GM10248 (cell line): ENCODE measurements at regions of chr11 and their contacts with region 1.

Region 1: DNA sequence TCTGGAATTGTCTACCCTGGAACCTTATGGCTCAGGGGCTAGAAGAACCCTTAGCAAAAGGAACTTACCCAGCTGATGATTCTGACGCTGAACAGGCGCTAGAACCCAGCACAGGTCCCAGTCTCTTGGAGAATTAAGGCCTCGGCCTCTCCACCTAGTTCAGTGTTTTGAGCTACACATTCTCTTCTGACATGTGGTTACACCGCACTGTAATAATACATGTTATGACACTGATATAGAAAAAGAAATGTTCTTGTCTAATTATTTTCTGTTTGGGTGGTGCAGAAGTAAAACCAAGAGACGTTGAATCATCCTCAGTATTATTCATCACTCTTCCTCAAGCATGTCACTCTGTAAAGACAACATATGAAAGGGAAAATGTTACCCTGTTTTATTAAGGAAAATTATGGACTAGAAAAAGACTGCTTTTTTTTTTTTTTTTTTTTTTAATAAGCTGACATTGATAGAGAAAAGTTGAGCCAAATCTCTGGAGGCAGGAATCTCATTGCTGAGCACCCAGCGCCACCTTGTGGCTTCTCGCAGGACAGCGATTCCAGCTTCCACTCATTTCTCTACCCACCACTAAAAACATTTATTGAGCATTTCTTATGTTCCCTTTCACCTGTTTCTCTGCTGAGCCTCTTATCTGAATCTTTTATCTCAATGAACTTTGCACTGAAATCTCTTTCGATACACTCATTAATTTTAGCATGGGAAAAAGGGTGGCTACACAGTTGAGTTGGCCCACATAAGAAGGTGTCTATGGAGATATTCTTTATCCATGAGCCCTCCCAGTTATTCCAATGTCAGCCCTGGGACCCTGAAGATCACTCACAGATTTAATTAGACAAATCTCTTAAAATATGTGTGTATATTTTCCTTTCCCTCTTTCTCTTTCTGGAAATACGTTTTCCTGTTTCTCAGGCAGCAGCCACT is 12.6 kb upstream of the APLNR start:
- DNase-seq: peak; percentile 52
- CTCF ChIP-seq: peak; percentile 79

Region 2: DNA sequence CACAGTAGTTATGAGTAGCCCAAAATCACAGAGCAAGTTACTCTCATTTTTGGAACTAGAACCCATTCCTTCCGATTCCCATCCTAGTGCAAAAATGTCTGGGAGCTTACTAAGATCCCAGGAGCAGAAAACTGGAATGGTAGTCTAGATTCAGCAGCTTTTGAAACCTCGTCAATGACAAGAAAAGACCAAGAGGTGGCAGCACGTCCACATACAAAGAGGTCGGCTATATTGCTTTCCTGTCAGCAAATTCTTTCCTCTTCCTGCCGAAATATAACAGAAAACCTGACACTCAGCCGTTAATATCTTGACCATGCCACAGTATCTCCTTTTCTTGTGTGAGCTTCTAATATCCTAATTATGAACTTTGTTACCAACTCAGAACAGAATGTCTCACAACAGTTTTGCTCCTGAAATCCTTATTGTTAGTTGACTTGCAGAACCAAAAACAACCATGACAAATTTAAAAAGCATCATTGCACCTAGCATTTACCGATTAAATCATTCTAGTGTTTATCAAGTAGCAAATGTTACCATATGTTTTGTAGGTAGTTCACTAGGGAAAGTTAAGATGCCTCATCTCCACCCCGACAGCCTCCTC is 408.3 kb before region 1 on chr11:
- CTCF ChIA-PET with region 1: interaction called, 177 read pairs
- POLR2A ChIA-PET with region 1: no interaction called
- DNase-seq: peak; percentile 37
- CTCF ChIP-seq: peak; percentile 58

Region 3: DNA sequence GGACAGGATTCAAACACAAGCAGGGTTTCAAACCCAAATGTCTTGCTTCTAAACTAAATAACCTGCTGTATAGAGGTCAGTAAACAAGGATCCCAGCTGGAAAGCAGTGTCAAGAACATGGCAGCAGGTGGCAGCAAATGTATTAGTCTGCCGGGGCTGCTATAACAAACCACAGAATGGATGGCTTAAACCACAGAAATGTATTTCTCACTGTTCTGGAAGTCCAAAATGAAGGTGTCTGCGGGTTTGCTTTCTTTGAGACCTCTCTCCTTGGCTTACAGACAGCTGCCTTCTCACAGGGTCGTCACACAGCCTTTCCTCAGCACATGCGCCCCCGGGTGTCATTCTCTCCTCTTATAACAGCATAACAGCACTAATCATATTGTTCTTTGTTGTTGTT is 133.0 kb before region 1 on chr11:
- CTCF ChIA-PET with region 1: interaction called, 53 read pairs
- POLR2A ChIA-PET with region 1: no interaction called
- DNase-seq: peak; percentile 14
- CTCF ChIP-seq: peak; percentile 36

Region 4: DNA sequence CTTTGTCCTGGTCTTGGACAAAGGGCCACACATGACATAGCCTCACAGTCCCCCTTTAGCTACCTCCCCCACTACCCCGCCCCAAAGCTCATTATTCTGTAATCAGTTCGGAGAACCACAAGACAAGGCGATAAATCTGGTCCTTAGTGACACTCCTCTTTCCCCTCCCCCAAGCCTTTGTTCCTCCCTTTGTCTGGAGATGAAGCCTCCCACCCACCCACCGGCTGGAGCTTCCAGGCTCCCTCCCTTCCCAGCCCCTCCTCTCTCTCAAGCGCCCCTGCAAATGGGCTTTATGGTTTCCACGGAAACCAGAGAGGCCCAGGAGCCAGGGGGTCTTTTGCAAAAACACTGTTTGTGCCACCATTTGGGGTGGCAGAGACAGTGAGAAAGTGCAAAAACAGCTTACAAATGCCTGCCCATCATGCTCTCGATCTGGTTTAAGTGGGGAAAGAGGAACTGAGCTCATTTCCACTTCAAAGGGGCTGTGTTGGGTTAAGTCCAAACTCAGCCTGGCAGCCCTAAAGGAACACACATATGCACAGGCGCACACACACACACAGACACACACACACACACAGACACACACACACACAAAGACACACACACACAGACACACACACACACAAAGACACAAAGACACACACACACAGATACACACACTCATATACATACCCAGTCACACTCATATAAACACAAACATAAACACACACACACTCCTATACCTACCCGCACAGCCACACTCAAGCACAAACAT is 36.1 kb before region 1 on chr11:
- CTCF ChIA-PET with region 1: interaction called, 12 read pairs
- POLR2A ChIA-PET with region 1: no interaction called
- DNase-seq: no peak
- CTCF ChIP-seq: no peak

Region 5: DNA sequence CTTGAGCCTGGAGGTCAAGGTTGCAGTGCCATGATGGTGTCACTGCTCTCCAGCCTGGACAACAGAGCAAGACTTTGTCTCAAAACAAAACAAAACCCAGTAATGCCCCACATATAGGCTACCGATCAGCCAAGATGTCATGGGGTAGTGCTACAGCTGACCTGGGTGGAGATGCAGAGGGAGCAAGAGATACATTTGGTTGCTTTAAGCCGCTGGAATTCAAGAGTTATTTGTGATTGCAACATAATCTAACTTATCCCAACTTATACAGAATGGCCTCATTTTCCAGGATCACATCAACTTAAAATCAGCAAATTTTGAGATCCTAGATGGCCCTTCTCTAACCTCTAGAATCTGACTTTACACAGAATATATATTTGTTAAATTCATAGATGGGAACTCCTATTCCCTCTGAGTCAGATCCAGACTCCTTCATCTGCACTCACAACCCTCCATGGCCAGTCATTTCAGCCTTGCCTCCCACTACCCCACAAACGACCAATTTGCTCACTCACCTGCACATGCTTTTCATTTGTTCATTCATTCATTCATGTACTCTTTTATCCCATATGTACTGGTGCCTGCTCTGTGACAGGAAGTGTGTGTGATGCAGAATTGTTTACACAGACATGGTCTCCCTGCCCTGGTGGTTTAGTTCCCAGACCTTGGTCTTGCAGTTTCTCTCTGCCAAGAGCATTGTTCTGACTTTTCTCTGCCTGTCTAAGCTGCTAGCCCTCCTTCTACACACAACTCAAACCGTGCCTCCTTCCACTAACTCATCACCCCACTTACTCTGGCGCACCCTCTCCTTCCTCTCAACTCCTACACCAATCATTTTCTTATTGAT is 11.5 kb after region 1 on chr11:
- CTCF ChIA-PET with region 1: interaction called, 26 read pairs
- POLR2A ChIA-PET with region 1: no interaction called
- DNase-seq: no peak
- CTCF ChIP-seq: no peak

Region 6: DNA sequence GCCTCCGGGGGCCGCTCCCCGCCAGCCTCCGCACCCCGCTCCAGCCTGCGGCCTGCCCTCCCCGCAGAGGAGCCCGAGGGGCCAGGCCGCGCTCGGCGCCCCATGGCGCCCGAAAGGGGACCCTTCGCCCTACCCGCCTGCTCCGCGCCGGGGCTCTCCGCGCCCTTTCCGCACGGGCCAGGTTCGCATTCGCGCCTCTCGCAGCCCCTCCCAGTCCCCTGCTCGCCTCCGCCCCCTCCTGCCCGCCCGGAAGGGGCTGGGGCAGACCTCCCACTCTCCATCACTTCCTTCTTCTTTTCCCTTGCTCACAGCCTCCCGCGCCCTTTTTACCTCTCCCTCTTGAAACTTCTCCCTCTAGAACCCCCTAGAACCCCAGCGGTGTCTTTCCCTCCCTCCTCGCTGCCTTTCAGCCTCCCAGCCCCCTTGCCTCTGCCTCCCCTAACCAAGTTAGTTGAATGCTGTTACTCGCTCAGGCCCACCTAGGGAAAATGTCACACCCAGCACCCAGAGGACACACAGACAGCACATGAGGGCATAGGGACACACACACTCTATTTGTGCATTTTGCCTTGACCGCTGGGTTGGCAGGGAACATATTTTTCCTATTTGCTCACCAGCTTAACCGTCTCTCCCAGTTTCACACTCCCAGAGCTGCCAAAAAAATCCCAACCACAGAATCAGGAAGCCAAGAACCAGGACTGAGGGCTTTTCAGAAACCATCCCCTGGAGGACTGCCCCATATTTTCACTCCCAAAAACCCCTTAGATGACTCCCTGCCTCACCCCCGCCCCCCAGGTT is 177.5 kb after region 1 on chr11 and contains the start of gene SLC43A3:
- CTCF ChIA-PET with region 1: no interaction called
- POLR2A ChIA-PET with region 1: no interaction called
- DNase-seq: peak; percentile 85
- CTCF ChIP-seq: no peak

Region 7: DNA sequence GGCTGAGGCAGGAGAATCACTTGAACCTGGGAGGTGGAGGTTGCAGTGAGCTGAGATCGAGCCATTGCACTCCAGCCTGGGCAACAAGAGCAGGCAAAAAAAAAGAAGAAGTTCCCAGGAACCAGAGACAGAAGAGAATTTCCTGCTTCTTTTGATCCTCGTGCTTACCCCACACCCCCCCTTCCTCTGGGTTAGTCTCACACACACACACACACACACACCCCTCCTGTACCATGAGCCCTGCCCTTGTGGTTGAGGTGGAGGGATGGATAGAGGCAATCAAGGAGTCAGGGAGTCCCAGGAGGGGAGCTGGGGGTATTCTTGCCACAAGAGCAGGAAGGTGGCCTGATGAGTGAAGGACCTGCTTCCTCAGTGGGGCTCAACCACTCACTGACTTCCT is 322.0 kb after region 1 on chr11:
- CTCF ChIA-PET with region 1: no interaction called
- POLR2A ChIA-PET with region 1: no interaction called
- DNase-seq: no peak
- CTCF ChIP-seq: no peak